ENCODE measurements at regions of chr5 and their contacts with region 1.

Region 1: GRCh38 chr5:157342822-157343402 is 77.0 kb downstream of the CYFIP2 start:
- DNase-seq: no peak
- ATAC-seq: peak; percentile 81
- H3K4me3 ChIP-seq: no peak overlapping the region
- H3K27ac ChIP-seq: no peak overlapping the region
- H3K4me1 ChIP-seq: no peaks in the 10 kb centered on the region
- H3K27me3 ChIP-seq: no peaks in the 10 kb centered on the region
- CTCF ChIP-seq: peak; percentile 46 to 68 (median 51)
- EP300 ChIP-seq: no peak
- POLR2A ChIP-seq: no peak
- RAD21 ChIP-seq: peak; percentile 15; the same call in 1 of the 2 replicates

Region 2: GRCh38 chr5:157288405-157289163 is 54.3 kb before region 1 on chr5:
- CTCF ChIA-PET with region 1: no interaction called
- POLR2A ChIA-PET with region 1: no interaction called
- RAD21 ChIA-PET with region 1: no interaction called
- SMC1A ChIA-PET with region 1: no interaction called
- in situ Hi-C with region 1: no loop called
- intact Hi-C with region 1: no loop called
- DNase-seq: no peak
- ATAC-seq: no peak
- H3K4me3 ChIP-seq: no peak overlapping the region
- H3K27ac ChIP-seq: no peak overlapping the region
- H3K4me1 ChIP-seq: peaks cover 8% of the 10 kb centered on the region
- H3K27me3 ChIP-seq: no peaks in the 10 kb centered on the region
- CTCF ChIP-seq: no peak
- EP300 ChIP-seq: no peak
- POLR2A ChIP-seq: no peak
- RAD21 ChIP-seq: no peak

Region 3: DNA sequence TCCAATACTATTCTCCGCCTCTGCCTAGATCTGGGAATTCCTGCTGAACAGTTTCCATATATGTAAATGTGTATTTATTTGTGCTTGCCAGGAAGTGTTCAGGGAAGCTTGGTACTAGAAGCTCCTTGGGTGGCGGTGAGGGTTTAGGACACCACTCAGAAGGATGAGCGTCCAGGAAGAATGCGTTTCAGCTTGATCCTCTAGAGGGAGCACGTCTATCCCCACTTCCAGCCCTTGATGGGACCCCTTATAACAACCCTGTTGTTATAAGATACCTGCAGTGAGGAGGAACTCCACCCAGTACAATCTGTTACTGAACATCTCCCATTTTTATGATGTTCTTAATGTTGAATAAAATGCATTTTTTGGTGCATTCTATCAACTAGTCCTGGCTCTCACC is 11.9 kb after region 1 on chr5:
- CTCF ChIA-PET with region 1: interaction called, 10 read pairs
- POLR2A ChIA-PET with region 1: no interaction called
- RAD21 ChIA-PET with region 1: no interaction called
- SMC1A ChIA-PET with region 1: interaction called, 7 read pairs
- in situ Hi-C with region 1: no loop called
- intact Hi-C with region 1: no loop called
- DNase-seq: no peak
- ATAC-seq: no peak
- H3K4me3 ChIP-seq: no peak overlapping the region
- H3K27ac ChIP-seq: no peak overlapping the region
- H3K4me1 ChIP-seq: peaks cover 5% of the 10 kb centered on the region; the same call in 1 of the 2 replicates
- H3K27me3 ChIP-seq: no peaks in the 10 kb centered on the region
- CTCF ChIP-seq: peak in 2 of 3 experiments; percentile 15 to 21; a peak in 2 of 6 replicates
- EP300 ChIP-seq: no peak
- POLR2A ChIP-seq: no peak
- RAD21 ChIP-seq: no peak

Measured in GM12878 (cell line).